T-cell (primary cell): ENCODE measurements at regions of chr2 and their contacts with region 1.

Region 1: DNA sequence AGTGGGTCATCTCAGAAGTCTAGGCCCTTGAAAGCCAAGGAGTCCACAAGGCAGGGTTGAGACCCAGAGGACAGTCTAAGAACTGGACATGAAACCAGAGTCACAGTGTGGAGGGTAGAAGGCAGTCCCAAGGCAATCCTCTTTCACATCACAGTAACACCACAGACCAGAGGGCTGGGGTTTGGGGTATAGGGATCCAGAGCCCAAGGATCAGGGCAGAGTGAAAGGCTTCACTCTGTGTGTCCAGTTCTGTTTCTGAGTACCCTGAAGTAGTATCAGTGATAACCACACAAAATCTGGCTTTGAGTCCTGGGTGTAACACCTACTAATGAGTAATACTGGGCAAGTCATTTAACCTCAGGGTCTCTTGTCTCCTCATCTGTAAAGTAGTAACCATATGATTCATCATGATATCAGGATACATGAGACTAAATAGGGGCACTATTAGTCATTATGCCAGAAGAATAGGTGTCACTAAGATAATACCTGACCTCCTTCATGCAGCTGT is 91.0 kb downstream of the ICA1L start:
- DNase-seq: no peak
- ATAC-seq: no peak
- H3K4me3 ChIP-seq: no peak overlapping the region
- H3K4me3 Mint-ChIP-seq: no peak overlapping the region
- H3K27ac ChIP-seq: no peak overlapping the region
- H3K27ac Mint-ChIP-seq: peak overlapping the region in 1 of 2 donors; percentile 34
- H3K4me1 ChIP-seq: no peaks in the 10 kb centered on the region
- H3K4me1 Mint-ChIP-seq: peaks cover 0 to 3% (median 0%) of the 10 kb centered on the region in 3 donors
- H3K27me3 ChIP-seq: no peaks in the 10 kb centered on the region
- H3K27me3 Mint-ChIP-seq: no peaks in the 10 kb centered on the region

Region 2: DNA sequence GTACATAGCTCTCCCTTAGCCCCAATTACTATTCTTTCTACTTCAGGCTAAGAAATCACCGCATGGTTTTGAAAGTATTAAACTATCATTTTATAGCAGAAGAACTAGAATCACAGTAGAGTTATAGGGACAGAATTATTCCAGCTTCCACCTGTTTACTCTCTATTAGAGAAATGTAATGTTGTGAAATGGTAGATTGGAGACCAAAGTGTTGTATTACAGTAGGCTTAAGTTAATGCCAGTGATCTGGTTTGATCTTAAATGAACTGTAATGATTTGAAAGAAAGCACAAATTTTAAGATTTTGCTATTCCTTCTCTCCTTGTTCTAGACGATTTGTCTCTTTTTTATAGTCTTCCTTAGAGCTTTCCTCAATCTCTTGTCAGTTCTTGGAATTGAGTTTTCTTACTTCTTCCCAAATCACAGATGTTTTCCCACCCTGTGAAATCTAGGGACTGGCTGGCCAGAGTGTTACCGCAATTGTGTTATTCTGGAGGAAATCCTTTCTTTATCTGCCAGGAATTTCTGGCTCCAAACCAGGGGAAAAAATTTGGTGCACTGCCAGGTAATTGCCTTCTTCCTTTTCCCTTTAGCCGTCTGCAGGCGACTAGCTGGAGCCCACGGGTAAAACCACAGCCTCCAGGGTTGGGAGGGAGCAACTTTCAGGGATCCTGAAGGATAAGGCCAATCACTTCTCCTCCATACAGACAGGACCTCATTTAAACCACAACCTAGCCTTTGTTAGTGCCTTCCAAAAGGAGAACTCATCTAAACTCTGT is 463.3 kb before region 1 on chr2:
- CTCF ChIA-PET with region 1: no interaction called
- POLR2A ChIA-PET with region 1: interaction called in 1 of 2 experiments, 10 read pairs
- DNase-seq: no peak
- ATAC-seq: no peak
- H3K4me3 ChIP-seq: no peak overlapping the region
- H3K4me3 Mint-ChIP-seq: no peak overlapping the region
- H3K27ac ChIP-seq: no peak overlapping the region
- H3K27ac Mint-ChIP-seq: no peak overlapping the region
- H3K4me1 ChIP-seq: no peaks in the 10 kb centered on the region
- H3K4me1 Mint-ChIP-seq: no peaks in the 10 kb centered on the region
- H3K27me3 ChIP-seq: no peaks in the 10 kb centered on the region
- H3K27me3 Mint-ChIP-seq: no peaks in the 10 kb centered on the region

Region 3: DNA sequence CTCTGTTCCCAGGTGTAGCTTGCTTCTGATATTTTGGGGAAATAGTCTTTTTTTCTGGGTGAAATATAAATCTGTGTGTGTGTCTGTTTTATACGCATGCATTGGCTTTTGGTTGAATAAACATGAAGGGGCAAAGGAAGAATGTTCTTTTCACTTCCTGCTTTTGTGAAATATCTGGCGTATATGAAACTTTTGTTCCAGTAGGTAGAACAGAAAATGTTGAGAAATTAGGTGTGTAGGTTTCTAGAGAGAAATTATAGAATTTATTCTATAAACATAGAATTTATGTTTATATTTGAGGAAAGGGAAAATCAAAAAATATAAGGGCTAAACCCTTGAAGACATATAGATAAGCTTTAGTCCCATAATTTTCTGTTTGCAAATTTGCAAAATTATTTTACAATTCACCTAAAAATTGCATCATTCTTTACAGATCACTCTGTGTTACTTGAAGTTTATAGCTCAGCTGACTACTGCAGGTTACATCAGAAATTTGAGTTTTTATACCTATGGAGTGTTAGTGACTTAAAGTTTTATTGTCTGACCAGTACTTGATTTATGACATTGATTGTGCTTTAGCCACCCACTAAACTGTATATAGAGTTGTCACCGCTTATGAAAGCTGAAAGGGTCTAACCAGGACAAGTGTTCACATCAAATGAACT is 29.7 kb before region 1 on chr2:
- CTCF ChIA-PET with region 1: no interaction called
- POLR2A ChIA-PET with region 1: no interaction called
- DNase-seq: no peak
- ATAC-seq: peak in 3 of 4 experiments; percentile 35 to 51 (median 51)
- H3K4me3 ChIP-seq: no peak overlapping the region
- H3K4me3 Mint-ChIP-seq: peak overlapping the region; percentile 13 to 18 (median 17)
- H3K27ac ChIP-seq: peak overlapping the region; percentile 24
- H3K27ac Mint-ChIP-seq: peak overlapping the region; percentile 88 to 95
- H3K4me1 ChIP-seq: peaks cover 10 to 32% of the 10 kb centered on the region in 2 experiments
- H3K4me1 Mint-ChIP-seq: peaks cover 52 to 71% (median 70%) of the 10 kb centered on the region in 3 donors
- H3K27me3 ChIP-seq: no peaks in the 10 kb centered on the region
- H3K27me3 Mint-ChIP-seq: no peaks in the 10 kb centered on the region